ENCODE measurements at regions of chr2 and their contacts with region 1.

Region 1: GRCh38 chr2:42086500-42086953 is 38.7 kb downstream of the PKDCC start:
- DNase-seq: peak; percentile 63
- ATAC-seq: peak; percentile 57
- H3K4me3 Mint-ChIP-seq: no peak overlapping the region
- H3K27ac Mint-ChIP-seq: no peak overlapping the region
- H3K4me1 Mint-ChIP-seq: peaks cover 8% of the 10 kb centered on the region
- H3K27me3 Mint-ChIP-seq: peaks cover 16% of the 10 kb centered on the region

Region 2: GRCh38 chr2:41853427-41854216 is 232.9 kb before region 1 on chr2:
- CTCF ChIA-PET with region 1: interaction called, 47 read pairs
- POLR2A ChIA-PET with region 1: no interaction called
- DNase-seq: no peak
- ATAC-seq: no peak
- H3K4me3 Mint-ChIP-seq: no peak overlapping the region
- H3K27ac Mint-ChIP-seq: no peak overlapping the region
- H3K4me1 Mint-ChIP-seq: no peaks in the 10 kb centered on the region
- H3K27me3 Mint-ChIP-seq: peaks cover 13% of the 10 kb centered on the region

Region 3: DNA sequence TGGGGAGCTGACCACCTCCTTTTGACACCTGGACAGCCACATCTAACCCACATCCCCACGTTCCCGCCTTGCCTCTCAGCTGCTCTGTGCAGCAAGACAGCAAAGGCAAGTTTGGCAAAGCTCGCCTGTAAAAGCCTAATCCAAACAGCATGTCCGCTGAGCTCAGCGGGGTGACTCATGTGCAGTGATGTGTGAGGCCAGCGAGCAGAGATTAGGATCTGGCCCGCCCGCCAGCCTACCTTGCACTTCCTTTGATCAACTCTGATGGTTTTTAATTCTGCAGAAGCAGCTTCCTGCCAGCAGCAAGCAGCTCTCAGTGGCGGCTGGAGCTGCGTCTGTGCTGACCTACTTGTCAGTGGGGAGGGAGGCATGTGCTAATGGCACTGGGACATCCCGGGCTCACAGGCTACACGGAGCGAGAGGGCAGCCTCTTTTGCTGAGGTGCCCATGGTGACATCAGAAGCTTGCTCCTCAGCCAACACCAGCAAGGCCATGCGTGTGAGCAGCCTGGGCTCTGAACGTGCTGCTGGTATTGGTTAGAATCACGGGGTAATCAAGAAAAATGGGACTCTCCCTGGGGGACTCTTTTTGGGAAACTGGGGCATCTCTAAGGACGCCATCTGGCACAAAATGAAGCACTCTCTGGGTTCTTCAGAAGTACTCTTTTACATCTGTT is 46.6 kb after region 1 on chr2:
- CTCF ChIA-PET with region 1: interaction called, 10 read pairs
- POLR2A ChIA-PET with region 1: no interaction called
- DNase-seq: peak; percentile 96
- ATAC-seq: peak; percentile 92
- H3K4me3 Mint-ChIP-seq: peak overlapping the region; percentile 65
- H3K27ac Mint-ChIP-seq: peak overlapping the region; percentile 95
- H3K4me1 Mint-ChIP-seq: peaks cover 89% of the 10 kb centered on the region
- H3K27me3 Mint-ChIP-seq: no peaks in the 10 kb centered on the region

Region 4: DNA sequence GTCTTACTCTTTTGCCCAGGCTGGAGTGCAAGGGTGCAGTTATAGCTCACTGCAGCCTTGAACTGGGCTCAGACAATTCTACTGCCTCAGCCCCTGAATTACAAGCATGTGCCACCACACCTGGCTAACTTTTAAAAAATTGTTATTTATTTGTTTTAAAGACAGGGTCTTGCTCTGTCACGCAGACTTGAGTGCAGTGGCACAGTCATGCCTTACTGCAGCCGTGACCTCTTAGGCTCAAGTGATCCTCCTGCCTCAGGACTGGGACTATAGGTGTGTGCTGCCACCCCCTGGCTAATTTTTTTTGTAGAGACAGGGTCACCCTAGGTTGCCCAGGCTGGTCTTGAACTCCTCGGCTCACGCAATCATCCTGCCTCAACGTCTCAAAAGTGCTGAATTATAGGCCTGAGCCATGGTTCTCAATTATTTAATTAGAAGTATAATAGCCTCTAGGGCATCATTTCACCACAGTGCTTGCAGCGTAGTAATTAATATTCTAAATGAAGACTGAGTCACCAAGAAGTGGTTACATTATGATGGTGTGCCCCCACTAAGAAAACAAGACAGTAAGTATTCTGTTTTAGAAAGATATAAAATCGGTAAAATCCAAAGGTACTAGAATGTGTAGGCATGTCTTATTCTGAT is 152.2 kb after region 1 on chr2:
- CTCF ChIA-PET with region 1: interaction called, 15 read pairs
- POLR2A ChIA-PET with region 1: no interaction called
- DNase-seq: peak; percentile 37
- ATAC-seq: peak; percentile 71
- H3K4me3 Mint-ChIP-seq: no peak overlapping the region
- H3K27ac Mint-ChIP-seq: no peak overlapping the region
- H3K4me1 Mint-ChIP-seq: peaks cover 12% of the 10 kb centered on the region
- H3K27me3 Mint-ChIP-seq: no peaks in the 10 kb centered on the region

Region 5: DNA sequence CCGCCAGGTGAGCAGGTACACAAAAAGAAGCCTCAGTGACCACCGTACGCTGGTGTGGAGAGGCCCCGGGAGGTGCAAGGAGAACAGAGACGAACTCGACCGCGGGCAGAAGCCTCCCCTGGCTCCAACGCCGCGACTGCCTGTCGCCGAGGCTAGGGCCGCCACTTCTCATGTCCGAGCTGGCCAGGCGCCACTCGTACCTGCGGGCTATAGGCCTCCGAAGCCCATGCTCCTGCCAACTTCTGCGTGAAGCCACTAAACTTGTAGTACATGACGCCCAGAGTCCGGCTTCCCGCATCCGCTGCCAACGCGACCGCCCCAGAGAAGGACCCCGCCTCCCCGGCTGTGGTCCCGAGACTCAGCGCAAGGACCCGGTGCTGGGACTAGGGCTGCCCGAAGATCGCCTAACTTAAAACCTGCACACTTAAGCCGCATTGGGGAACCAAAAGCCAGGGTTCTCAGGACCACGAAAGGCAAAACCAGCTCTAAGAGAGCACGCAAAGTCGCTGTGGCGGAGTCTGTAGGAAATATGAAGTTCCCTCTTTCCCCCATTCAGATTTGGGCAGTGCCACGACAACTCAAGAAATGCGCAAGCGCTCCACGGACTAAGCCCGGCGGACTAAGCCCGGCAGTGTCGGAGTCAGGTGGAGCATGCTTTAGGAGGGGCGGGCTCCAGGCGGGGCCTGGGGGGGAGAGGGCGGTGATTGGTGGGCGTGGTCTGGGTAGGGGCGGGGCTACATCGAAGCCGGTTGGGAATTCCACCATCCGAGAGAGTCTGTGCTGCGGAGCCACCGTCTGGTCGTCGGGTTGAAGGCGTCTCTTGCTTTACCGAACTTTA is 274.6 kb after region 1 on chr2 and contains the start of gene COX7A2L:
- CTCF ChIA-PET with region 1: interaction called, 11 read pairs
- POLR2A ChIA-PET with region 1: no interaction called
- DNase-seq: peak; percentile 96
- ATAC-seq: peak; percentile 96
- H3K4me3 Mint-ChIP-seq: peak within 1 kb of the TSS; percentile 81
- H3K27ac Mint-ChIP-seq: peak within 1 kb of the TSS; percentile 99
- H3K4me1 Mint-ChIP-seq: peaks cover 39% of the 10 kb centered on the region
- H3K27me3 Mint-ChIP-seq: no peaks in the 10 kb centered on the region
- total RNA-seq, gene COX7A2L: 102 to 109 TPM